Caco-2 (cell line): ENCODE measurements at regions of chr3 and their contacts with region 1.

Region 1: DNA sequence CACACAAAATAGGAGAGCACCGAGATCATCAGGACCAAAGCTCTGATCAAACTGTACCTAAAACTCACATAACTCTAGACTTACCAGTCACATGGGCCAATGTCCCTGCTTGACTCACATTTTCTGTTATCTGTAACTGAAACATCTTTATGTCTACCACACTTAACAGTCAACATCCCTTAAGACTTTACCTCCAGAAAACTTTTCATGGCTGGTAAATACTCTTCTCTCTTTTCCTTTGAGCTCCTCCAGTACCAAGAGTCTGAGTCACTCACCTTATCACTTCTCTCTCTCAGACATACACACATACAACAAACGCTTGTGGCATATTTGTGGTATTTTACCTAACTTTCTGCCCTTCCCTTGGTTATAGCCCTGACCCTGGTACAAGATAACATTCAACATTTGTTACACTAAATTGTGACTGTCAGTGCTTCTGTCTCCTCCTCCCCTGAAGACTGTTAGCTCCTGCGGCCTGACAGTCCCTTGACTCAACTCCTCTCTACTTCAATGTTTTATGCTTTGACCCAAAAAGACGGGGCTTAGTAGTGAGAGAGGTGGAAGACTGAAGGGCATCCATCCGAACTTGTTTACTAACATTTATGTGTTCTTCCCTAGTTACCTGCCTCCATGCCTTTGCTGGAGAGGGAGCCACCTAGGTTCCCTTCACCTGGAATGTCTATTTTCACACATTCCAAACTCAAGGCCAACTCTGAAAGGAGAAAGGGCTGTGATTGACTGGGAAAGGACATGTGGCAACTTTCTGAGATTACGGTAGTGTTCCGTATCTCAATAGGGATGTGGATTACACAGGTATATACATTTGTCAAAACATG is 3.7 kb upstream of the EFHB start:
- DNase-seq: peak in 1 of 2 experiments; percentile 41
- H3K4me3 ChIP-seq: no peak overlapping the region
- H3K4me3 Mint-ChIP-seq: no peak overlapping the region
- H3K27ac Mint-ChIP-seq: peak overlapping the region; percentile 43
- H3K4me1 ChIP-seq: peaks cover 12% of the 10 kb centered on the region
- H3K4me1 Mint-ChIP-seq: peaks cover 22% of the 10 kb centered on the region
- H3K27me3 ChIP-seq: no peaks in the 10 kb centered on the region
- H3K27me3 Mint-ChIP-seq: no peaks in the 10 kb centered on the region
- CTCF ChIP-seq: no peak

Region 2: GRCh38 chr3:19898721-19899120 is 39.0 kb before region 1 on chr3:
- CTCF ChIA-PET with region 1: no interaction called
- POLR2A ChIA-PET with region 1: no interaction called
- intact Hi-C with region 1: loop called (anchors 2 kb)
- DNase-seq: no peak
- H3K4me3 ChIP-seq: no peak overlapping the region
- H3K4me3 Mint-ChIP-seq: peak overlapping the region; percentile 34
- H3K27ac Mint-ChIP-seq: peak overlapping the region; percentile 10
- H3K4me1 ChIP-seq: peaks cover 18% of the 10 kb centered on the region; the same call in 1 of the 2 replicates
- H3K4me1 Mint-ChIP-seq: peaks cover 12% of the 10 kb centered on the region
- H3K27me3 ChIP-seq: no peaks in the 10 kb centered on the region
- H3K27me3 Mint-ChIP-seq: no peaks in the 10 kb centered on the region
- CTCF ChIP-seq: no peak

Region 3: GRCh38 chr3:19960696-19961095 is 23.0 kb after region 1 on chr3:
- CTCF ChIA-PET with region 1: no interaction called
- POLR2A ChIA-PET with region 1: no interaction called
- intact Hi-C with region 1: no loop called
- DNase-seq: no peak
- H3K4me3 ChIP-seq: no peak overlapping the region
- H3K4me3 Mint-ChIP-seq: no peak overlapping the region
- H3K27ac Mint-ChIP-seq: no peak overlapping the region
- H3K4me1 ChIP-seq: peaks cover 5% of the 10 kb centered on the region
- H3K4me1 Mint-ChIP-seq: no peaks in the 10 kb centered on the region
- H3K27me3 ChIP-seq: no peaks in the 10 kb centered on the region
- H3K27me3 Mint-ChIP-seq: no peaks in the 10 kb centered on the region
- CTCF ChIP-seq: no peak

Region 4: GRCh38 chr3:19972051-19972454 is 34.4 kb after region 1 on chr3:
- CTCF ChIA-PET with region 1: no interaction called
- POLR2A ChIA-PET with region 1: no interaction called
- intact Hi-C with region 1: no loop called
- DNase-seq: no peak
- H3K4me3 ChIP-seq: no peak overlapping the region
- H3K4me3 Mint-ChIP-seq: no peak overlapping the region
- H3K27ac Mint-ChIP-seq: peak overlapping the region; percentile 47
- H3K4me1 ChIP-seq: peaks cover 7% of the 10 kb centered on the region; the same call in 1 of the 2 replicates
- H3K4me1 Mint-ChIP-seq: peaks cover 15% of the 10 kb centered on the region
- H3K27me3 ChIP-seq: no peaks in the 10 kb centered on the region
- H3K27me3 Mint-ChIP-seq: no peaks in the 10 kb centered on the region
- CTCF ChIP-seq: no peak

Region 5: DNA sequence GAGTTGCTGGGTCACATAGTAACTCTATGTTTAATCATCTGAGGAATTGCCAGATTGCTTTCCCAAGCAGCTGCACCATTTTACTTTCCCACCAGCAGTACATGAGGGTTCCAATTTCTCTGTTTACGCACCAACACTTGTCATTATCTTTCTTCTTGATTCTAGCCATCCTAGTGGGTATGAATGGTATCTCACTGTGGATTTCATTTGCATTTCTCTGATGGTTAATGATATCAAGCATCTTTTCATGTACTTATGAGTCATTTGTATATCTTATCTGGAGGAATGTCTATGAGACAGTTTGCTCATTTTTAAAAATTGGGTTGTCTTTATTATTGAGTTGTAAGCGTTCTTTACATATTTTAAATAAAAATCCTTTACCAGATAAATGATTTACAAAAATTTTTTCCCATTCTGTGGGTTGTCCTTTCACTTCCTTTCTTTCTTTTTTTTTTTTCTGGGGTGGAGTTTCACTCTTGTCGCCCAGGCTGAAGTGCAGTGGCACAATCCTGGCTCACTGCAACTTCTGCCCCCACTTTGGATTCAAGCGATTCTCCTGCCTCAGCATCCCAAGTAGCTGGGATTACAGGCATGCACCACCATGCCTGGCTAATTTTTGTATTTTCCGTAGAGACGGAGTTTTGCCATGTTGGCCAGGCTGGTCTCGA is 257.2 kb after region 1 on chr3:
- CTCF ChIA-PET with region 1: no interaction called
- POLR2A ChIA-PET with region 1: no interaction called
- intact Hi-C with region 1: no loop called
- DNase-seq: no peak
- H3K4me3 ChIP-seq: no peak overlapping the region
- H3K4me3 Mint-ChIP-seq: no peak overlapping the region
- H3K27ac Mint-ChIP-seq: no peak overlapping the region
- H3K4me1 ChIP-seq: peaks cover 9% of the 10 kb centered on the region
- H3K4me1 Mint-ChIP-seq: peaks cover 9% of the 10 kb centered on the region
- H3K27me3 ChIP-seq: no peaks in the 10 kb centered on the region
- H3K27me3 Mint-ChIP-seq: no peaks in the 10 kb centered on the region
- CTCF ChIP-seq: no peak